ENCODE measurements at regions of chr4 and their contacts with region 1.

Region 1: GRCh38 chr4:1289207-1290164 is at the start of gene MAEA:
- DNase-seq: peak; percentile 96 to 100
- H3K4me3 ChIP-seq: peak within 1 kb of the TSS; percentile 78
- CTCF ChIP-seq: no peak
- POLR2A ChIP-seq: no peak
- total RNA-seq, gene MAEA: 79.6 to 124 (median 89.4) TPM

Region 2: GRCh38 chr4:1039493-1040343 is 249.8 kb before region 1 on chr4:
- intact Hi-C with region 1: loop called (anchors 10 kb)
- DNase-seq: no peak
- H3K4me3 ChIP-seq: no peak overlapping the region
- CTCF ChIP-seq: no peak
- POLR2A ChIP-seq: no peak

Measured in lower leg skin (tissue), 4 donors.